GM10248 (cell line): ENCODE measurements at regions of chr14 and their contacts with region 1.

Region 1: GRCh38 chr14:22122227-22122818 is 448.7 kb upstream of the OR4E1 start:
- DNase-seq: no peak
- CTCF ChIP-seq: peak; percentile 52

Region 2: DNA sequence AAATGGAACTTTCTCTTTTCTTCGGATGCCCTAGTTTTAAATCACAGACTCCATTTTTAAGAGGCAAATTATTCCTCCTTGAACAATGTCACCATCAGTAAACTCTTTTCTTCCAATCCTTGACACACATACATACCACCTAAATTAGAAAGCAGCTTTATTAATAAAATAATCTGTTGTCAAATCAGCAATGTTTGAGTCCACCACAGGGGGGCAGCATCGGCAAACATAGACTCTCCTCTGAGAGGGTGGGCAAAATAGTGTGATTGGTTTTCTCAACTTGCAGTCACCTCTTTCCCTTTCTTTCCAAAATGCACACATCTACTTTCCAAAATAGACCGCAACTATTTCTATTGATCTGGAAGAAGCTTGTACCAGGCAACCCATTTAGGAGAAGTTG is 10.3 kb before region 1 on chr14:
- CTCF ChIA-PET with region 1: interaction called, 19 read pairs
- POLR2A ChIA-PET with region 1: no interaction called
- DNase-seq: peak; percentile 29
- CTCF ChIP-seq: peak; percentile 49

Region 3: DNA sequence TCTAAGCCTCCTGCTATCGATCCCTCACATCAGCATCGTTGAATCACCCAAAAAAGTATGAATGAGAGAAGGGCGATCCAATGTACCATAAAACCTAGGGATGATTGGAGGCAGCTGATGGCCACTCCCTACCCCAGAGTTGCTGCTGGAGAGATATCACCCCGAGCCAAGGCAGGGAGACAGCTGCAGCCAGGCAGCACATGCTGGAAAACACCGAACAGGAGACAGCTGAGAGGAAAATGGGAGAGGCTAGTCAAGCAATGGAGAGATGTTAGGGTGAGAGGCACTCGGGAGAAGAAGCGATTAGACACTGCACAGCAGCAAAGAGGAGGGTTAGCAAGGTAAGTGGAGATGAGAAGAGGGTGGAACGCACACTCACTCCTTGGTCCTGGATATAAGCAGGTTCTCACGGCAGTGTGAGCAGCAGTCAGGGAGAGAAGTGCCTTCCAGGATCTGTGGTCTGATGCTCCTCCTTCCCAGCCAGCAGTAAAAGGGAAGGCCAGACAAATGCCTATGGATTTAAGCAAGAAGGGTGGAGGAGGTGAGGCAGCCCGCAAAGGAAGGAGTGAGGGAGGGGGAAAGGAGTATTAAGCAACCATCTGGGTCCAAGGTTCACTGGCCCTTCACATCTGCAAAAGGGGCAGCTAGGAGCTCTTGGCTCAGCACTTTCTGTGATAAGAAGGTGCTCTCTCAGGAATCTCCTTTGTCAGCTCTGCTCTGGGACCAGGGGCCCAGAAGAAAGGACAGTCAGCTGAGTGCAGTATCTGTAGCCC is 692.8 kb after region 1 on chr14 and contains the start of gene SLC7A7:
- CTCF ChIA-PET with region 1: no interaction called
- POLR2A ChIA-PET with region 1: no interaction called
- DNase-seq: no peak
- CTCF ChIP-seq: no peak